ENCODE measurements at regions of chr2 and their contacts with region 1.

Region 1: GRCh38 chr2:173448938-173449471 is 94.3 kb downstream of the CDCA7 start:
- DNase-seq: peak; percentile 73 to 93
- H3K4me3 ChIP-seq: peak overlapping the region in 1 of 4 experiments; percentile 42; a peak in 2 of 8 replicates
- H3K27ac ChIP-seq: no peak overlapping the region
- H3K4me1 ChIP-seq: no peaks in the 10 kb centered on the region; a peak in 2 of 7 replicates
- H3K27me3 ChIP-seq: no peaks in the 10 kb centered on the region
- CTCF ChIP-seq: peak; percentile 63 to 82 (median 73)
- EP300 ChIP-seq: no peak
- POLR2A ChIP-seq: peak in 1 of 2 experiments; percentile 46; a peak in 1 of 3 replicates
- RAD21 ChIP-seq: peak; percentile 78 to 79

Region 2: DNA sequence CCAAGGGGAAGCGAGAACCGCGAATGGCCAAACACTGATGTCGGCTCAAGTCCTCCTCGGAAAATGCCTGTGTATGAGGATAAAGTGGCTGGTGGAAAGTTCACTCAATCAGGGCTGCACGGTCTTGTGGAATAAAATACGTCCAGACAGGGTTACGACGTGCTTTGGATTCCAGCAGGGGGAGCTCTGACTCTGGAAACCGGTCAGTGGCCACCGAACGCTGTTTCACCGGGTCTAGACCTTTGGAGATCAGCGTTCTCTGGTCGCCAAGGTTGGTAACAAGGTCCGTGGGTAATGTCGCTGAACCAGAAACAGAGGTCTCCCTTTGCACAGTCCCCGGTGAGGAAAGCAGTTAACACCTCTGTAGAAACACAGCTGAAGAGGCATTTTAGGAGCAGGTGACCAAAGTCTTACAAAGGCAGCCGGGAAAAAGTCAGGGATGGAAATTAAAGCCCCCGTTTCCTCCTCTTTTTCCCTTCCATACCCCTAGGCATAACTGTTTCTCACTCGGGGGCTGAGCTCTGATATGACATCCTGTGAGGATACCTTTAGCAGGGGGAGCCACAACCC is 46.5 kb before region 1 on chr2:
- CTCF ChIA-PET with region 1: interaction called, 61 read pairs
- POLR2A ChIA-PET with region 1: interaction called, 3 read pairs
- DNase-seq: peak; percentile 58 to 83
- H3K4me3 ChIP-seq: peak overlapping the region in 3 of 4 experiments; percentile 20 to 50 (median 27); a peak in 3 of 8 replicates
- H3K27ac ChIP-seq: no peak overlapping the region
- H3K4me1 ChIP-seq: peaks cover 3 to 10% (median 6%) of the 10 kb centered on the region in 4 experiments; a peak in 4 of 7 replicates
- H3K27me3 ChIP-seq: no peaks in the 10 kb centered on the region; a peak in 2 of 7 replicates
- CTCF ChIP-seq: peak; percentile 78 to 93 (median 92)
- EP300 ChIP-seq: no peak
- POLR2A ChIP-seq: no peak
- RAD21 ChIP-seq: peak; percentile 98 to 99

Region 3: GRCh38 chr2:173462892-173463840 is 14.2 kb after region 1 on chr2:
- CTCF ChIA-PET with region 1: interaction called, 28 read pairs
- POLR2A ChIA-PET with region 1: no interaction called
- DNase-seq: no peak
- H3K4me3 ChIP-seq: no peak overlapping the region
- H3K27ac ChIP-seq: no peak overlapping the region
- H3K4me1 ChIP-seq: peaks cover 0 to 3% (median 0%) of the 10 kb centered on the region in 4 experiments; a peak in 1 of 7 replicates
- H3K27me3 ChIP-seq: no peaks in the 10 kb centered on the region
- CTCF ChIP-seq: peak in 1 of 3 experiments; percentile 11; a peak in 1 of 4 replicates
- EP300 ChIP-seq: no peak
- POLR2A ChIP-seq: no peak
- RAD21 ChIP-seq: peak in 1 of 2 experiments; percentile 35; a peak in 3 of 4 replicates

Region 4: DNA sequence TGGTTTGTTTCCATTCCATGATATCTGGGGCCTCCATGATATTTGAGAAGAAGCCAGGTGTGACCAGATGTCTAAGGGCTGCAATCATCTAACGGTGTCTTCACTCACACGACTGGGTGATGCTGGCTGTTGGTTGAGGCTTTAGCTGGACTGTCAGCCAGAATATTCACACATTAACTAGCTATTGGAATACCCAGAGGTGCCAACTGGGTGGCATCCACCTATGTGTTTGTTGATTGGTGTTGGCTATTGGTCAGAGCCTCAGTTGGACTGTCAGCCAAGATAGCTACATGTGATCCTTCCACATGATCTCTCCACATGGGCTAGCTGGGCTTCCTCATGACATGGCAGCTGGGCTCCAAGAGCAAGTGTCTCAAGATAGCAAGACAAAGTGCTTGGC is 23.1 kb after region 1 on chr2:
- CTCF ChIA-PET with region 1: interaction called, 15 read pairs
- POLR2A ChIA-PET with region 1: no interaction called
- DNase-seq: no peak
- H3K4me3 ChIP-seq: no peak overlapping the region
- H3K27ac ChIP-seq: no peak overlapping the region
- H3K4me1 ChIP-seq: no peaks in the 10 kb centered on the region
- H3K27me3 ChIP-seq: no peaks in the 10 kb centered on the region
- CTCF ChIP-seq: no peak
- EP300 ChIP-seq: no peak
- POLR2A ChIP-seq: no peak
- RAD21 ChIP-seq: 0 out of 4 replicates have a peak, but pooled peaks of 1 of the 2 experiments have one; percentile 2